AG04449 (cell line): ENCODE measurements at regions of chr13 and their contacts with region 1.

Region 1: GRCh38 chr13:24020375-24020830 is 123.1 kb upstream of the C1QTNF9B start:
- DNase-seq: no peak
- H3K4me3 ChIP-seq: no peak overlapping the region
- CTCF ChIP-seq: peak; percentile 65

Region 2: DNA sequence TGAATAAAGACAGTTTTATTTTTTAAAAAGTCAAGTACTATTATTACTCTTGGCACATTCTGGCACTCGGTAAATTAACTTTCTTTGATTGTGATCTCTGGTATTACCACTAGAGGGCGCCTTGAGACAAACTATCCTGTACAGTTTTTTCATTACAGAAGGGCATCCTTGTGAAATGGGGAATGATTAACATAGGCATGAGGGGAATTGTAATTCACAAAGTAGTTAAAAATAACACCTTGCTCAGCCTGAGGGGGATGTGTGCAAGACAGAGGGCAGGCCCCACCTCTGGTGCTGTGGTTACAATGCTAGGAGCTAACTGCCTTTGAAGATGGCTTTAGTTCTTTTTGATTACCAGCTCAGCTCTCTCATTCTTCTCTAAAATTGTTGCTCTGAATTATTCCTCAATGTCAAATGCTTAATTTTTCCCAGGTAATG is 98.9 kb before region 1 on chr13:
- CTCF ChIA-PET with region 1: interaction called, 10 read pairs
- POLR2A ChIA-PET with region 1: no interaction called
- DNase-seq: no peak
- H3K4me3 ChIP-seq: no peak overlapping the region
- CTCF ChIP-seq: peak; percentile 37

Region 3: GRCh38 chr13:24033527-24034302 is 13.3 kb after region 1 on chr13:
- CTCF ChIA-PET with region 1: interaction called, 40 read pairs
- POLR2A ChIA-PET with region 1: no interaction called
- DNase-seq: peak; percentile 72
- H3K4me3 ChIP-seq: no peak overlapping the region
- CTCF ChIP-seq: no peak

Region 4: DNA sequence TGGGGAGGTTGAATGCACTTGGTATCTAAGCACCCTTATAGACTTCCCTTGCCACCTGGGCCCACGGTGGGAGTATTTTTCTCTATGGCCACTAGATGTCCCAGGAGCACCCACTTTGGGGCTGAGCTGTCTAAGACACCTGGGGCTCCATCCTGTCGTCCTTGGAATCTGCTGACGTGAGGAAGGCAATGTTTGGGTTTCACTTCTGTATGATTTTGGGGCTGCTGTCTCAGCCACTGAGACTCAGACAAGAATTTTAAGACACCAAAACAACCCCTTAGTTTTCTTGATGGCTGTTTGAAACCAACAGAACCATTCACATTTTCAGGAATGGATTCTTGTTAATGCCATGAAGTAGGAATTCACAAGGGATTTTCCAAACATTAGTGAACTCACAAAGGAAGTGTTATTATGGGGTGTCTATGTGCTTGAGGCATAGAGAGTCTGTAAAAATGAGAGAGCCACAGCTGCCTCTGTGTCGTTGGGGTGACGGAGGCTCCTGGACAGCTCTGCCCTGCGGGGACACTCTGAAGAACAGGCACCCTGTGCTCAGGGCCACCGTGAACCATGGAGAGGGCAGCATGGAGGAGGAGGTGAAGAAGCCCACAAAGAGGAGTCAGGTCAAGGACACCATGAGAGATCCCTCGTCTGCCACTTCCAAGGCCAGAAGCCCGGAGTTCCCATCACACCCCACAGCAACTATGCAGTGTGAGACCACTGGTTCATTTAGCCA is 33.3 kb after region 1 on chr13:
- CTCF ChIA-PET with region 1: interaction called, 34 read pairs
- POLR2A ChIA-PET with region 1: no interaction called
- DNase-seq: no peak
- H3K4me3 ChIP-seq: no peak overlapping the region
- CTCF ChIP-seq: peak; percentile 74

Region 5: DNA sequence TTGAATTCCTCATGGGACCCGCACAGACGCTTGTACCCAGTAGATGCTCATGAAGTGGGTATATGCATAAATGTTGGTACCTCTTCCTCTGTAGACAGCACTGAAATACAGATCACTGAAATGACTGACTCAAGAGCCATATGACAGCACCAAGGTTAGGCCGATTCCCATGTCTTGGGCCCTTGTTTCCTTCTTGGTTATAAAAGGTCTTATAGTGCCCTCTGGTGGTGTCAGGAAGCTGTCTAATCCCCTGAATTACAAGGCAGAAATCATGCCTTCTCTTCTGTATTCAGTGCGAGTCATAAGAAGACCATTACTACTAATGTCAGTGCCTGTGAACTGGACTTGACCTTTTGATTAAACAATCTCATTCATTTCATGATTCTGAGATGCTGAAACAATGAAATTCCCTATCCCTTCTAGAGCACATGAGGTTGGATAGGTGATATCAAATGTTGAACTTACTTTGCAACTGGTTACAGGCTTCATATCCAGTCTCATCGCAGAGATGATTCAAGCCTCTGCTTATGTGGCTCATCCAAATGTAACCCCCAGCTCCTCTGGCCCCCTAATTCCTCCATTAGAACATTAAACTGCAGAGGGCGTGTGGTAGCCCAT is 199.8 kb after region 1 on chr13:
- CTCF ChIA-PET with region 1: interaction called, 438 read pairs
- POLR2A ChIA-PET with region 1: no interaction called
- DNase-seq: peak; percentile 49
- H3K4me3 ChIP-seq: no peak overlapping the region
- CTCF ChIP-seq: peak; percentile 63